Mammary epithelial cell (primary cell): ENCODE measurements at regions of chrX and their contacts with region 1.

Region 1: DNA sequence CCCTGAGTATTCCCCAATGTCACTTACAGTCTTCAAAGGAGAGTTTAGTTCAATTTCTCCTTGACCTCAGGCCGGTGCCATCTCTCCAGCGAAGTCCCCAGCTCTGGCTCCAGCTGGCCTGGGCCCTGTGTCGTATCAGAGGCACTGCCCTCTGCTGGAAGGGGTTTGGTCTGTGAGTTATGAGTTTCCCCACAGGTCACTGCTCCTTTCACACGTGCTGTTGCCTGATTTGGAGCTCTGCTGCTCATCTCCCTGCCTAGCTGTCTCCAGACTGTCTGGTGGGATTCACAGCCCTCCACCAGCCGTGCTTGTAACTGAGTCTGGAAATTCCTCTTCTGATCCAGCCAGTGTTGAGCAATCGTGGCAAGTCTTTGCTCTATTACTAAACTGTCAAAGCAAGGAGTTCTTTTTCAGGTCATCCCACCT is at the start of gene RAP2C:
- DNase-seq: peak; percentile 64
- H3K4me3 ChIP-seq: peak within 1 kb of the TSS; percentile 59 to 68 (median 67)
- H3K27ac ChIP-seq: peak within 1 kb of the TSS; percentile 91
- H3K4me1 ChIP-seq: no peaks in the 10 kb centered on the region
- H3K27me3 ChIP-seq: no peaks in the 10 kb centered on the region
- CTCF ChIP-seq: peak; percentile 50 to 75
- total RNA-seq, gene RAP2C: 24.2 to 30.7 TPM

Region 2: DNA sequence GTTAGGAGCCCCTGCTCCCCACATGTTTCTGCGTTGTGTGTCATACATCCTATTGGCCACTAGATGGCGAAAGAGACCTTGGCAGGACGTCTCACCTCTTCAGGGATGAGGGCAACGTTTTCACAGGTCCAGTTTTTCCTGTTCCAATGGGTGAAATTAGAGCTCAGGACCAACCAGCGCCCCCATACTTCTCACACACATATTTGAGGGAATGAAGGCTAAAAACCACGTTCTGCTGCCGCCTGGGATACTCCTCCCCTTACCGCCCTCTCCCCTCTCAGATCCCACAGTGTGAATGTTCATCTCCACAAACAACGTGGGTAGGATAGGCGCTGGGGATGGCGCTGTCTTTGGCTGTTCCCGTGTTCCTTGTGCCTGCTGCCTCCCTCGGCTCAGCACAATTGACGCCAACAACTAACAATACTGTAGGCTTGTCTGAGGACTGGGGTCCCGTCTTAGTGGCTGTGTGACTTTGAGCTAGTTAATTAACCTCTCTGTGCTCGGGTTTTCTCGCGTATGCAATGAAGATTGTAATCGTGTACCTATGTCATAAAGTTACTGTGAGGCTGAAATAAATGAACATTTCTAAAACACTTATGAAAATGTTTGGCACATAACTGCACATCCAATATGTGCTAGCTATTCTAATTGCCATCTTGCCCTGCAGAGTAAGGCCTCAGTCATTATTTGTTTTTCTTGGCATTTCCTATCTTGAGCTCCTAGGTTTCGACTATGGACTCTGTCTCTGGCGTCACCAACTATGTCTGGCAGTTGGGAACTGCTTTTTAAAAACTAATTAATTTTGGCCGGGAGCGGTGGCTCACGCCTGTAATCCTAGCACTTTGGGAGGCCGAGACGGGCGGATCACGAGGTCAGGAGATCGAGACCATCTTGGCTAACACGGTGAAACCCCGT is 377.6 kb before region 1 on chrX:
- CTCF ChIA-PET with region 1: interaction called, 3 read pairs
- dilution Hi-C with region 1: no loop called
- in situ Hi-C with region 1: no loop called
- intact Hi-C with region 1: loop called (anchors 1 kb)
- DNase-seq: peak; percentile 54
- H3K4me3 ChIP-seq: no peak overlapping the region
- H3K27ac ChIP-seq: no peak overlapping the region
- H3K4me1 ChIP-seq: no peaks in the 10 kb centered on the region
- H3K27me3 ChIP-seq: no peaks in the 10 kb centered on the region
- CTCF ChIP-seq: peak; percentile 87 to 92

Region 3: GRCh38 chrX:131854581-131854980 is 364.8 kb before region 1 on chrX:
- CTCF ChIA-PET with region 1: interaction called, 5 read pairs
- dilution Hi-C with region 1: no loop called
- in situ Hi-C with region 1: loop called in 1 of 2 experiments (anchors 25 kb)
- intact Hi-C with region 1: no loop called
- DNase-seq: no peak
- H3K4me3 ChIP-seq: no peak overlapping the region
- H3K27ac ChIP-seq: no peak overlapping the region
- H3K4me1 ChIP-seq: no peaks in the 10 kb centered on the region
- H3K27me3 ChIP-seq: peaks cover 2% of the 10 kb centered on the region
- CTCF ChIP-seq: peak; percentile 3 to 36

Region 4: DNA sequence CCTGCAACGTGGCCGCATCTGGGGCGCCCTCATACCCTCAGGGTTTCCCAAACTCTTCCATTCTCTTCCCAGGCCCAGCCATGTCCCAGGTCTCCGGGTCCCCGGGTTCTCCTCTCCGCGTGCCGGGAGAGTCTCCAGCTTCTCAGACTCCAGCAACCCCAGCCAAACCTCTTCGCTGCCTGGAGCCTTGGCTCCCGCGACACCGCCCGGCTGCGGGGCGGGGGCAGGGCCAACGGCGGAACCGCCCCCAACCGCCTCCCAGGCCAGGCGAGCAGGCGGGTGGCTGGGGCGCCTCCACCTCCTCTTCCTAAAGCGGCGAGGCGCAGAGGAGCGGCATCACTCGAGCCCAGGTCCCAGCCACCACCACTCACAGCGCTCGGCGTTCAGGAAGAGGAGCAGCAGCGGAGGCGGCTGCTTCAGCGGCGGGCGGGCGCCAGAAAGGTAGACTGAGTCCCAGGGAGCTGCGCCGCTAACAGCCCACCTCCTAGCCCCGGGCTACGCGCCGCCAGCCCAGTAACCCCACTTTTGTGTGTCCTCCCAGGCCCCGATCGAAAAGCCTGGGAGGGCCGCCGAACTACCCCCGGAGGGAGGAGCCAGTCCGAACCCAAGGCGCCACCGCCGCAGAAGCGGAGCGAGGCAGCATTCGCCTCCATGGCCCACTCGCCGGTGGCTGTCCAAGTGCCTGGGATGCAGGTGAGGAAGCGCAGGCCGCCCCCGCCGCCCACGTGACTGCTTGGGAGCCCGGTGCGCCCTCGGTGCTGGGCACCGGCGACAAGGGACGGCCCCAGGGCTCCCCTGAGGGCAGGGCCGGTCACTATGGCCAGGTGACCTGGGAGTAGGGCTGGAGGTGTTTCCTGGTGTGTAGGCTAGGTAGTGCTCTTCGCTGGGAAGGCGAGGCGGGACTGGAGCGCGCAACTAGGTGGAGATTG is 196.1 kb before region 1 on chrX and contains the start of gene STK26:
- CTCF ChIA-PET with region 1: no interaction called
- dilution Hi-C with region 1: no loop called
- in situ Hi-C with region 1: loop called in 1 of 2 experiments (anchors 25 kb)
- intact Hi-C with region 1: loop called (anchors 2 kb)
- DNase-seq: peak; percentile 76
- H3K4me3 ChIP-seq: peak within 1 kb of the TSS; percentile 66 to 86 (median 71)
- H3K27ac ChIP-seq: peak within 1 kb of the TSS; percentile 55
- H3K4me1 ChIP-seq: no peaks in the 10 kb centered on the region
- H3K27me3 ChIP-seq: no peaks in the 10 kb centered on the region
- CTCF ChIP-seq: no peak
- total RNA-seq, gene STK26: 45.3 to 72.7 TPM

Region 5: DNA sequence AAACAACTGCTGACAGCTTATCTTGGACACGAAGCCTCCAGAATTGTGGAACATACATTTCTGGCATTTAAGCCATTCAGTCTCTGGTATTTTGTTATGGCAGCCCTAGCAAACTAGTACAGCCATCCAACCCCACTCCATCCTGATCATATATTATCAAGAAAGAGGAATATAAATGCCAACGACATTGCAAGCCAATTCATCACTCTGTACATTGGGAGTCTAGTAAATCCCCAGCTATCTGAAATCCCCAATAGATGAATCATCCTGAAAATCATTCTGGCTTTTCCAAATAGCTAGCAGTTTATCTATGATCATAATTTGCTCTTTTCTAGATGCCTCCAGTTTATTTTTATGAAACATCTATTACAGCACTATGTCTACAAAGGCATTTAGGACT is 132.7 kb before region 1 on chrX:
- CTCF ChIA-PET with region 1: no interaction called
- dilution Hi-C with region 1: no loop called
- in situ Hi-C with region 1: loop called in 1 of 2 experiments (anchors 10 kb)
- intact Hi-C with region 1: no loop called
- DNase-seq: peak; percentile 23
- H3K4me3 ChIP-seq: no peak overlapping the region
- H3K27ac ChIP-seq: no peak overlapping the region
- H3K4me1 ChIP-seq: peaks cover 4% of the 10 kb centered on the region
- H3K27me3 ChIP-seq: peaks cover 8% of the 10 kb centered on the region
- CTCF ChIP-seq: no peak

Region 6: GRCh38 chrX:132092439-132093065 is 126.8 kb before region 1 on chrX:
- CTCF ChIA-PET with region 1: interaction called, 30 read pairs
- dilution Hi-C with region 1: no loop called
- in situ Hi-C with region 1: loop called in 1 of 2 experiments (anchors 10 kb)
- intact Hi-C with region 1: loop called (anchors 1 kb)
- DNase-seq: peak; percentile 54
- H3K4me3 ChIP-seq: no peak overlapping the region
- H3K27ac ChIP-seq: no peak overlapping the region
- H3K4me1 ChIP-seq: no peaks in the 10 kb centered on the region
- H3K27me3 ChIP-seq: peaks cover 1% of the 10 kb centered on the region
- CTCF ChIP-seq: peak; percentile 89 to 90

Region 7: GRCh38 chrX:132181353-132181752 is 38.0 kb before region 1 on chrX:
- CTCF ChIA-PET with region 1: no interaction called
- dilution Hi-C with region 1: no loop called
- in situ Hi-C with region 1: no loop called
- intact Hi-C with region 1: no loop called
- DNase-seq: peak; percentile 57
- H3K4me3 ChIP-seq: no peak overlapping the region
- H3K27ac ChIP-seq: no peak overlapping the region
- H3K4me1 ChIP-seq: no peaks in the 10 kb centered on the region
- H3K27me3 ChIP-seq: no peaks in the 10 kb centered on the region
- CTCF ChIP-seq: no peak

Region 8: DNA sequence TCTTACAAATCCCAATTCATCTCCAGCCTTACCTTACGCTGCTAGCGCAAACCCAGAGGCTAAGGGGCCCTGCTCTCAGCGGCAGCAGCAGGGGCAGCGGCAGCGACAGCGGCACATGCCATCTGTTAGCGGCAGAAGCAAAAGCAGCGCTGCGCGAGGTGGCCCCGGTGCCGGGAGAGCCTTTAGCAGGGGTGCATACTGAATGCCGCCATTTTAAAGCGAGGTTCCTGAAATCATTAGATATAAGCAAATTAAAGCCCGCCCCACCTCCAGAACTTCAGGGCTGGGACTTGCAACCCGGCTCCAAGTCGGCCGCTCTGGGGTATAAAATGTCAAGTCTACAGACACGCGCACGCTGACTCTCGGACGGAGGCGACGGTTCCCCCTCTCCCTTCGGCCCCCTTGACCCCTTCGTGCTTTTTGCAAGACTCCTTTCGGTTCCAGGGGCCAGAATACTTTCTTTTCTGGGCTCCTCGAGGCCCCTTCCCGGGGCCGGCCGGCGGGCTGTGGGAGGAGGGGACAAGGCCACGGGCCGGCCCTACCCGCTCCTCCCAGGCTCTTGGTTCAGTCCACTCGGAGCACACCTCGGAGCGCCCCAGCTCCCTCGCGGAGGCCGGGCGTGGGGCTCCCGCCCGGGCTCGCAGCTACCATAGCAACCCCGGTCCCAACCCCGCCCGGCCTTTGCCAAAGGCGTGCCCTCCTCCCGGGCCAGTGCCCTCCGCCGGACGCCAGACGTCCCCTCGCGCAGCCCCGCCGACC is 269.6 kb after region 1 on chrX and contains the start of gene MBNL3:
- CTCF ChIA-PET with region 1: no interaction called
- dilution Hi-C with region 1: no loop called
- in situ Hi-C with region 1: no loop called
- intact Hi-C with region 1: loop called (anchors 5 kb)
- DNase-seq: peak; percentile 66
- H3K4me3 ChIP-seq: peak within 1 kb of the TSS; percentile 61 to 72 (median 67)
- H3K27ac ChIP-seq: peak within 1 kb of the TSS; percentile 75
- H3K4me1 ChIP-seq: peaks cover 10% of the 10 kb centered on the region
- H3K27me3 ChIP-seq: no peaks in the 10 kb centered on the region
- CTCF ChIP-seq: no peak
- total RNA-seq, gene MBNL3: 5.7 to 12.9 TPM